ENCODE measurements at regions of chr2 and their contacts with region 1.

Region 1: DNA sequence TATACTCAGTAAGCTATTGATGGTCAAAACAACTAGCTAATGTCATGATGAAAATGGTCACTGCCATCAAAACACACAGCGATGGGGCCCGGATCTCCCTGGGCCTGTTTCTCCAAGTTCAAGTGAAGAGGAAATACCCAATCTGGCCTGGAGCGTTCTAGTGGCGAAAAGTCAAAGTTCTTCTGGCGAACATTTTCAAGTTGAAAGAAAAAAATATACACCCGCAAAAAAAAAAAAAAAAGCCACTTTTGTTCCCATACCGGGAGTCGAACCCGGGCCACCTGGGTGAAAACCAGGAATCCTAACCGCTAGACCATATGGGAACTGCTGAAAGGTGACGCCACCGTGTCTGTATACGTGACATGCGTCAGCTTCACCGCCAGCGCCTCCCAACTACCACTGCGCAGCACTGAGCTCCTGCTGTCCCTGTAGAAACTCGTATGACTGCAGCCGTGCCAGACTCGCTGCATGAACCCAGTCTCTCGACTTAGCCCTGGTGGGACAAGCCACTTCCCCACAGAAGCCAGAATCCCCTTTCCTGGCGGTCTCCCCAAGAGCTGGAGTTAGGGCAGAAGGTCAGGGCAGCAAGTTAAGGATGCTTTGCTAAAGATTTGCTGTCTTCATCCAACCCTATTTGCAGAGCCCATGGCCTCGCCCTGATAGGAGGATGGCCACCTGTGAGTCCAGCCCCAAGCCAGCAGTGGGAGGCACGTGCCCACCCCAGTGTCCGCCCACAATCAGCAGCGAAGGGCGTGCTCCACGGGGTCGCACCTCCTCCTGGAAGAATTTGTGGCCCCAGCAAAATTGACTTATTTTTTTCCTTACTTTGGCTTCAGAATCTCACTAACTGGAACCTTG is 5.6 kb upstream of the IMP4 start:
- DNase-seq: peak; percentile 61 to 93 (median 85)

Region 2: DNA sequence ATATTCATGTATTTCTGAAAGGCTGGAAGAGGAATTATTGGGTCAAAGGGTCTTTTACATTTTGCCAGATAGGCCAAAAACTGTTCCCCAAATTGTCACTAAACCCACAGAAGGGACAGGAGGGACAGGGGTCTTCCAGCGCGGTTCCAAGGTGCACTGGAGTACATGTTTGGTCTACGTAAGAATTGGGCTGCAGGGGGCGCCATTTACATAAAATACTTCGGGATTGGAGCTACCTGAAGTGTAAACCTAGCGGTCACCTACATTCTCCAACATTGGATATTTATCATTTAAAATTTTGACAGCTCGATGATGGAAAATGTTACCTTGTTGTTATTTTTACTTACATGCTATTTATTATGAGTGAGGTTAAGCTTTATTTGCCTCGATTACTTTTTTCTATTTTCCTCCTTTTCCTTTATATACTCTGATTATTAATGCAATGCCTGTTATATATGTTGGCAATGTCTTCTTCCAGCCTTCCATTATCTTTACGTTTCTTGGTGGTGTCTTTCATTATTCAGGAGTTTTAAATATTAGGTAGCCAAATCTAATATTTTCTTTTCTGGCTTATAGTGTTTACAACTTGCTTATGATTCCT is 400.7 kb before region 1 on chr2:
- intact Hi-C with region 1: loop called (anchors 5 kb)
- DNase-seq: peak in 28 of 42 donors; percentile 41 to 90 (median 73)

Region 3: GRCh38 chr2:130303169-130303568 is 33.9 kb before region 1 on chr2:
- intact Hi-C with region 1: no loop called
- DNase-seq: no peak

Measured in head of caudate nucleus (tissue), 42 donors.